Endothelial cell of umbilical vein (primary cell): ENCODE measurements at regions of chr9 and their contacts with region 1.

Region 1: DNA sequence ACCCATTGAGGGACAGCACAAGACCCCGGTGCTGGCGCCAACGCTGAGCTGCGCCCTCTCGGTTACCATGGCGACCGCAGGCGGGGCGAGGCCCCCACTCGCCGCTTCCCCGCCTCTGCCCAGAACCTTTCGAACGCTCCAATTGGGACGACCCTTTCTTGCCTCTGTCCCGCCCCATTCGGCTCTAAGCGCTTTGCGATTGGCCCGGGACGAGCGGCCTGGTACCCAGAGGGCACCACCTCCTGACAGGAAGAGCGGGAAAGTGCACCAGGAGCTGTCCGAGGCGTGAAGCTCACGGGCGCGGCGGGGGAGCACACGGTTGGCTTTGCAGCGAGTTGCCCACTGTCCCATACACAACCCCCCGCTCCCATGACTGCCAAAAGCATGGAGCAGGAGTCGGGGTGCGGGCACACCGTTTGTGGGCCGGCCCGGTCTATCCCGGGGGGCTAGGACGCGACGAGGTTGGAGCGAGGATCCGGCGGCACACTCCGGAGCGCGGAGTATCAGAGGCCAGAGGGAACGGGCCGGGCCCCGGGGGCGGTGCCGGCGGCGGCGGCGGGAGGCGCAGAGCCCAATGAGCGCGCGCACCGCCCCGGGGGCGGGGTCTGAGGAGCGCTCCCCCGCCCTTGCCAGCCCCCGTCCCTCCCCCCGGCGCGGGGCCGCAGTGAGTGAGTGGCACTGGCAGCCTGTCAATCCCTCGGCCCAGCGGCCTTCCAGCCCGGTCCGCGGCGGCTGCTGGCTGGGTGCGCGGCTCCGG is 978 bp upstream of the PBX3 start:
- DNase-seq: peak; percentile 96
- H3K4me3 ChIP-seq: peak overlapping the region in 2 of 3 experiments; percentile 38 to 92
- H3K27ac ChIP-seq: peak overlapping the region; percentile 9
- H3K4me1 ChIP-seq: peaks cover 24% of the 10 kb centered on the region
- H3K27me3 ChIP-seq: peaks cover 3 to 4% of the 10 kb centered on the region in 2 experiments
- CTCF ChIP-seq: no peak
- POLR2A ChIP-seq: peak; percentile 72

Region 2: DNA sequence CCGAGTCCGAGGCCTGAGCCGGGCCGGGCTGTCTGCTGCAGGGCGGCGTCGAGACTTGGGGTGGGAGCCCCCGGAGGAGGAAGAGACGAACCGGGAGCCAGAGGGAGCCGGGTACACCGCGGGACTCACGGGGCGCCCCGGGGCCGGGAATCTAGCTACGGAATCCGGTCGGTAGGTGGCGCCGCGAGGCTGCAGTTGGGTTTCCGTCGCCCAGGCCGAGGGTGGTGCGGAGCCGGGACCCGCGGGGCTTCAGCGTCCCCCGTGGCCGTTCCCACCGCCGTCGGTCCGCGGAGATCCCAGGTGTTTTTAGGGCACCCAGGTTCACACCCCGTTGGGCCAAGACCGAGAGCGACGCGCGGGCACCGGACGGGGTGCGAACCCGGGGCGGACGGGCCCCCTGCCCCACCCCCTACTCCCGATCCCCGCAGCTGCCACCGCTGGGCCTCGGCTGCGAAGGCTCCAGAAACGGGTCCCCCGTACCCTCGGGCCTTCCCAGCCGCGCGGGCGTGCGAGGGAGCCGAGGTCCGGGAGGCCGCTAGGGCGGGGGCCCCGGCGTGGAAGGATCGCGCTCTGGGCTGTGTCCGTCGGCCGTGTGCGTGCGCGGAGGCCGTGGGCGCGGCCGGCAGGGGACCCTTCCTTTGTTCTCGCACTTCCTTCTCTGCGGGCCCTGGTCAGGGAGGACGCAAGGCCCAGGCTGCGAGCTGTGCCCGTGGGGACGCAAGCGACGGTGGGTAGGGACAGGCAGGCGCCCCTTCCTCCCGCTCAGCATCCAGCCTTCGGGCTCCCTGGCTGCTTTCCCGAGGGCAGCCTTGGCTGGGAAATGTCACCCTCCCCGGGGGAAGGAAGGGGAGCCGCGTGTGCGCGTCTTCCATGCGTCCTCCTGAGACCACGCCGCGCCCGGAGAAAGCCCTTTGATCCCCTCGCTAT is 338.0 kb before region 1 on chr9:
- CTCF ChIA-PET with region 1: interaction called, 10 read pairs
- POLR2A ChIA-PET with region 1: no interaction called
- dilution Hi-C with region 1: no loop called
- intact Hi-C with region 1: loop called (anchors 5 kb)
- DNase-seq: peak; percentile 61
- H3K4me3 ChIP-seq: peak overlapping the region; percentile 39 to 62 (median 40)
- H3K27ac ChIP-seq: peak overlapping the region; percentile 66
- H3K4me1 ChIP-seq: peaks cover 3% of the 10 kb centered on the region
- H3K27me3 ChIP-seq: no peaks in the 10 kb centered on the region
- CTCF ChIP-seq: peak; percentile 82 to 93
- POLR2A ChIP-seq: no peak

Region 3: DNA sequence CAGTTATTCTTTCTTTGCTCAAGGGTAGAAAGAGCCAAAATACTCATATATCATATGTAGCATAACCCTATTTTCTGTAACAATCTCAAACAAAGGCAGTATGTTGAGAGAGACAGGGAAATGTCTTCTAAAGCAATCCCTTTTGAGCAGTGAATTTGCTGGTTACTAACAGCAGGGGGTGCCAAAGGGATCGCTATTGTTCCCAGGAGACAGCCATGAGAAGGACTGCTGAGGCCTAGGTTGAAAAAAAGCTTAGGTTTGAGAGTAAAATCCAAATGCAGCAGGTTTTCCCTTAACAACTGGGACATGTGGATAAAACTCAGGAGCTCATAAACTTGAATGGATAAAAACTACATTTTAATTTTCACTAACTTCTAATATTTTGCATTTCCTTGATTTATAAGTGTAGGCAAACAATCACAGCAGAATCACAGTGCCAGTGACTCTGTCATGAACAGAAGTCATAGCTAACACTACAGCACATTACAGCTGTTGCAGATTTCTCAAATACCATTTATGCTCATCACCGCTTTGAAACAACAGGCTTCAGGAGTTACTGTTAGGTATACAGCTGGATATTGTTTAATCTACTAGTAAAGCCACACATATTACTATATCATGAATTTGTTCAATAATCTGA is 187.6 kb before region 1 on chr9:
- CTCF ChIA-PET with region 1: interaction called, 9 read pairs
- POLR2A ChIA-PET with region 1: no interaction called
- dilution Hi-C with region 1: no loop called
- intact Hi-C with region 1: loop called (anchors 1 kb)
- DNase-seq: peak; percentile 78
- H3K4me3 ChIP-seq: no peak overlapping the region
- H3K27ac ChIP-seq: no peak overlapping the region
- H3K4me1 ChIP-seq: peaks cover 5% of the 10 kb centered on the region
- H3K27me3 ChIP-seq: no peaks in the 10 kb centered on the region
- CTCF ChIP-seq: peak; percentile 78 to 81
- POLR2A ChIP-seq: no peak

Region 4: DNA sequence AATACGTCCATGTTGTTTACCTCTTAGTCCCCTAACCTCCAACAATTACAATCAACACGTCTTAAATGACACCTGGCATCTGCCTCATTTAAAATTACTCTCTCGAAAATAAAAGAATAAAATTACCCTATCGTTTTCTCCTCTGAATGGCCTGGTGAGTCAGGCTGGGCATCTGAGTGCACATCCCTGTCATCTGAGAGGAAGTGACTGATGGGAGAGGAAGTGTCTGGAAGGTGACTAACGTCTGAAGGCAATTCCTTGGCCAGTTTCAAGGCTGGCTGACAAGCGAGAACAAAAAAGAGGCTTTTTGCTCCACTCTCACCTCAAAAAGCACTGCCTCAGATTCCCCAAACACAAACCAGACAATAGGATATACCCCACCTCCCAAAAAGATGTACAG is 96.9 kb before region 1 on chr9:
- CTCF ChIA-PET with region 1: no interaction called
- POLR2A ChIA-PET with region 1: interaction called, 4 read pairs
- dilution Hi-C with region 1: no loop called
- intact Hi-C with region 1: loop called (anchors 1 kb)
- DNase-seq: peak; percentile 92
- H3K4me3 ChIP-seq: no peak overlapping the region
- H3K27ac ChIP-seq: peak overlapping the region; percentile 99
- H3K4me1 ChIP-seq: peaks cover 52% of the 10 kb centered on the region
- H3K27me3 ChIP-seq: no peaks in the 10 kb centered on the region
- CTCF ChIP-seq: no peak
- POLR2A ChIP-seq: peak; percentile 41

Region 5: DNA sequence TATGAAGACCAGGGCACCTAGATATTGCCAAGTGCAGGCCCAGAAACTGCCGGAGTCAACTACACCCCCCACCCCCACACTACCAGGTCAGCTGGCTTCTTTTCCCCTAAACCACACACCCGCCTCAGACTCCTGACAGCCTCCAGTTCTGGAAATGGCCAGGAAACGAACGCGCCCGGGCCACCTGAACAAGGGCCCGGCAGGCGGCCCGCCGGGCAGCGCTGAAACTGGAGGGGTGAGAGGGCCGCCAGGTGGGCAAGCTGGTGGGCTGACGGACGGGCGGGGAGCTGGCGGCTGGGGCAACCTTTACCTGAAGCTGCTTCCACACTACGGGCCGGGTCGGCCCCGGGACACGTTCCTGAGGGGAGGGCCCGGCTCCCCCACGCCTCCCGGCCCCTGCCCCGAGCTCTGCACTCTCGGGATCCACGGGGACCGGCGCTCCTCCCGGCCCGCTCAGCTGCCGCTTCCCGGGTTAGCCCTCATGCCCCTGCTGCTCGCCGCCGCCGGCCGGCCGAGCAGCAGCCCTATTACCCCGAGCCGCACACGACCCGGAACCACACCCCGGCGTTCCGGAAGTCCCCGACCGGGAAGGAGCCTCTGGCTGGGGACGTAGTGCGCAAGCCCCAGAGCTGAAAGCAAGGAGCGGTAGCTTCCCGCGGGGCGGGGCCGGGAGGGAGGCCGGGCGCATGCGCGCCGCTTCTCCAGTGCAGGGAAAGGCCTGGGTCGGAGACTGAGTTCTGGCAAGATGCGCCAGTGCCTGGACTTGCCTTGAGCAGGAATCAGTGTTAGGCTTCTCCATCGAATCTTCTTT is 39.3 kb before region 1 on chr9 and contains the start of gene MAPKAP1:
- CTCF ChIA-PET with region 1: interaction called, 6 read pairs
- POLR2A ChIA-PET with region 1: interaction called, 5 read pairs
- dilution Hi-C with region 1: no loop called
- intact Hi-C with region 1: loop called (anchors 2 kb)
- DNase-seq: peak; percentile 95
- H3K4me3 ChIP-seq: peak within 1 kb of the TSS; percentile 75 to 85 (median 84)
- H3K27ac ChIP-seq: peak within 1 kb of the TSS; percentile 82
- H3K4me1 ChIP-seq: peaks cover 13% of the 10 kb centered on the region
- H3K27me3 ChIP-seq: no peaks in the 10 kb centered on the region
- CTCF ChIP-seq: no peak
- POLR2A ChIP-seq: peak; percentile 82
- total RNA-seq, gene MAPKAP1: 98.6 and 99.1 TPM in 2 replicates

Region 6: GRCh38 chr9:126228781-126229444 is 482.7 kb after region 1 on chr9:
- CTCF ChIA-PET with region 1: interaction called, 3 read pairs
- POLR2A ChIA-PET with region 1: no interaction called
- dilution Hi-C with region 1: no loop called
- intact Hi-C with region 1: loop called (anchors 2 kb)
- DNase-seq: peak; percentile 60
- H3K4me3 ChIP-seq: no peak overlapping the region
- H3K27ac ChIP-seq: no peak overlapping the region
- H3K4me1 ChIP-seq: no peaks in the 10 kb centered on the region
- H3K27me3 ChIP-seq: peaks cover 2 to 5% of the 10 kb centered on the region in 2 experiments
- CTCF ChIP-seq: peak; percentile 83 to 95
- POLR2A ChIP-seq: no peak